SK-N-SH (cell line): ENCODE measurements at regions of chr2 and their contacts with region 1.

Region 1: GRCh38 chr2:235505181-235505741 is 11.4 kb downstream of the AGAP1 start:
- DNase-seq: peak; percentile 53
- H3K4me3 ChIP-seq: no peak overlapping the region
- H3K27ac ChIP-seq: peak overlapping the region in 1 of 2 experiments; percentile 30; a peak in 1 of 4 replicates
- H3K4me1 ChIP-seq: peaks cover 24 to 39% of the 10 kb centered on the region in 2 experiments
- H3K27me3 ChIP-seq: no peaks in the 10 kb centered on the region
- CTCF ChIP-seq: no peak
- EP300 ChIP-seq: no peak
- RAD21 ChIP-seq: no peak

Region 2: GRCh38 chr2:235468978-235469655 is 36.1 kb before region 1 on chr2:
- CTCF ChIA-PET with region 1: no interaction called
- POLR2A ChIA-PET with region 1: no interaction called
- DNase-seq: no peak
- H3K4me3 ChIP-seq: no peak overlapping the region
- H3K27ac ChIP-seq: peak overlapping the region in 1 of 2 experiments; percentile 42; a peak in 2 of 4 replicates
- H3K4me1 ChIP-seq: peaks cover 0 to 7% of the 10 kb centered on the region in 2 experiments; a peak in 2 of 4 replicates
- H3K27me3 ChIP-seq: no peaks in the 10 kb centered on the region; the same call in 1 of the 2 replicates
- CTCF ChIP-seq: no peak
- EP300 ChIP-seq: no peak
- RAD21 ChIP-seq: no peak

Region 3: DNA sequence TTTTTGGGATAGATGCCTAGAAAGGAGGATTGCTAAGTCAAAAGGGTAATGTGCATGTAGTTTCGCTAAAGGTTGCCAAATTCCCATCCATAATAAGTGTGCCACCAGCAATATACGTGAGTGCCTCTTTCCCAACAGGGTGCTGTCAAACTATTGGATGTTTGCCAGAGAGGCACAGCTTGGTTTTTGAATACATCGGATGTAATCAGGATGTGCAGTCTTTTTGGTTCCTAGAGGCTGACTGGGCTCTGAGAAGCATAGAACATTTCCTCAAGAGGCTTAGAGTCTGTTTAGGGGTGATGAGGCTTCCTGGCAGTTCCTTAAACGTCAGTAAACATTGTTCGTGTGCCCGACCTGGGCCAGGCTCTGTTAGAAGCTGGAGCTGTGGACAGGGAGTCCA is 16.6 kb after region 1 on chr2:
- CTCF ChIA-PET with region 1: interaction called, 10 read pairs
- POLR2A ChIA-PET with region 1: no interaction called
- DNase-seq: no peak
- H3K4me3 ChIP-seq: no peak overlapping the region
- H3K27ac ChIP-seq: no peak overlapping the region
- H3K4me1 ChIP-seq: peaks cover 0 to 3% of the 10 kb centered on the region in 2 experiments; a peak in 1 of 4 replicates
- H3K27me3 ChIP-seq: no peaks in the 10 kb centered on the region
- CTCF ChIP-seq: no peak
- EP300 ChIP-seq: no peak
- RAD21 ChIP-seq: no peak